ENCODE measurements at regions of chr1 and their contacts with region 1.

Region 1: GRCh38 chr1:204446370-204447111 is 34.9 kb upstream of the PPP1R15B start:
- DNase-seq: peak; percentile 84
- ATAC-seq: peak; percentile 93
- H3K4me3 Mint-ChIP-seq: no peak overlapping the region
- H3K27ac Mint-ChIP-seq: peak overlapping the region; percentile 81
- H3K4me1 Mint-ChIP-seq: peaks cover 30% of the 10 kb centered on the region
- H3K27me3 Mint-ChIP-seq: no peaks in the 10 kb centered on the region

Region 2: GRCh38 chr1:204307334-204307883 is 139.1 kb before region 1 on chr1:
- CTCF ChIA-PET with region 1: no interaction called
- POLR2A ChIA-PET with region 1: no interaction called
- DNase-seq: no peak
- ATAC-seq: no peak
- H3K4me3 Mint-ChIP-seq: no peak overlapping the region
- H3K27ac Mint-ChIP-seq: no peak overlapping the region
- H3K4me1 Mint-ChIP-seq: no peaks in the 10 kb centered on the region
- H3K27me3 Mint-ChIP-seq: peaks cover 20% of the 10 kb centered on the region

Region 3: DNA sequence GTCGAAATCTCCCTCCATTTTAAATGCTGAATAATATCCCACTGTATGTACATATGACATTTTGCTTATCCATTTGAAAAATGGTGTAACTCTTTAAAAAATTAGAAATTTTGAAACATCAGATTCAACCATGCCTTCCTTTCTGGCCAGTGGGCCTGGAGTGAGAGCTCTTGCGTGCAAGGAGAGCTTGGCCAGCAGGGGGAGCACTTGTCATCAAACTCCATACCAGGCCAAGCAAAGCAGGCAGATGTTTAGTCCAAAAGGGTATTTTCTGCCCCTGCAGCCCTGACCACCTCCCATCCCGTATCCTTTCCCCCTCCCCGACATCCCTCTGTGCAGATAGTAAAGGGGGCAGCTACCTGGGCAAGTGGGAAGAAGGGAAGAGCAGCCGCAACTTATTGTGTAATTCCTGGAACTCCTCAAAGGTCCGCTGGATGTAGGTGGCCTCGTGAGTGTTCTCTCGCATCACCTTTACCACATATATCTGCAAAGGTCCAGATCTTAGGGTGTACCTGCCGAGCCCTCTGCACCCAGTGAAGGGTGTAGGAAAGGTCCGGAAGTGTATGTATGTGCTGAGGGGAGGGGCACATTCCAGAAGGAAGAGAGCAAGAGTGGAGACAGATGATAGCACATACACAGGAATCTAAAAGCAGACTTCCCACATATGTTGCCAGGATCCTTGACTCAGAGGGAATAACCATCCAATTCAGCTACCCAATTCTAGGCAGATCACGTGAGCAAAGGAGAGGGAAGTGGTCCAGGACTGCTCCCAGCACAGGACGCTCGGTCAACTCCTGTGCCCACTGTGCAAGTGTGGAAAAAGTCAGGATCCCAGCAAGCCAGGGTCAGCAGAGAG is 15.0 kb before region 1 on chr1:
- CTCF ChIA-PET with region 1: interaction called, 226 read pairs
- POLR2A ChIA-PET with region 1: interaction called, 6 read pairs
- DNase-seq: peak; percentile 86
- ATAC-seq: peak; percentile 93
- H3K4me3 Mint-ChIP-seq: no peak overlapping the region
- H3K27ac Mint-ChIP-seq: no peak overlapping the region
- H3K4me1 Mint-ChIP-seq: no peaks in the 10 kb centered on the region
- H3K27me3 Mint-ChIP-seq: no peaks in the 10 kb centered on the region

Region 4: GRCh38 chr1:204480515-204480914 is 34.0 kb after region 1 on chr1:
- CTCF ChIA-PET with region 1: interaction called, 39 read pairs
- POLR2A ChIA-PET with region 1: no interaction called
- DNase-seq: no peak
- ATAC-seq: peak; percentile 32
- H3K4me3 Mint-ChIP-seq: no peak overlapping the region
- H3K27ac Mint-ChIP-seq: no peak overlapping the region
- H3K4me1 Mint-ChIP-seq: peaks cover 34% of the 10 kb centered on the region
- H3K27me3 Mint-ChIP-seq: no peaks in the 10 kb centered on the region

Region 5: GRCh38 chr1:204494281-204495077 is 47.9 kb after region 1 on chr1 and contains the start of gene PIK3C2B:
- CTCF ChIA-PET with region 1: interaction called, 1,090 read pairs
- POLR2A ChIA-PET with region 1: interaction called, 18 read pairs
- DNase-seq: peak; percentile 80
- ATAC-seq: peak; percentile 86
- H3K4me3 Mint-ChIP-seq: peak within 1 kb of the TSS; percentile 77
- H3K27ac Mint-ChIP-seq: peak within 1 kb of the TSS; percentile 89
- H3K4me1 Mint-ChIP-seq: peaks cover 58% of the 10 kb centered on the region
- H3K27me3 Mint-ChIP-seq: peaks cover 2% of the 10 kb centered on the region
- total RNA-seq, gene PIK3C2B: 26.2 to 28.4 TPM

Region 6: DNA sequence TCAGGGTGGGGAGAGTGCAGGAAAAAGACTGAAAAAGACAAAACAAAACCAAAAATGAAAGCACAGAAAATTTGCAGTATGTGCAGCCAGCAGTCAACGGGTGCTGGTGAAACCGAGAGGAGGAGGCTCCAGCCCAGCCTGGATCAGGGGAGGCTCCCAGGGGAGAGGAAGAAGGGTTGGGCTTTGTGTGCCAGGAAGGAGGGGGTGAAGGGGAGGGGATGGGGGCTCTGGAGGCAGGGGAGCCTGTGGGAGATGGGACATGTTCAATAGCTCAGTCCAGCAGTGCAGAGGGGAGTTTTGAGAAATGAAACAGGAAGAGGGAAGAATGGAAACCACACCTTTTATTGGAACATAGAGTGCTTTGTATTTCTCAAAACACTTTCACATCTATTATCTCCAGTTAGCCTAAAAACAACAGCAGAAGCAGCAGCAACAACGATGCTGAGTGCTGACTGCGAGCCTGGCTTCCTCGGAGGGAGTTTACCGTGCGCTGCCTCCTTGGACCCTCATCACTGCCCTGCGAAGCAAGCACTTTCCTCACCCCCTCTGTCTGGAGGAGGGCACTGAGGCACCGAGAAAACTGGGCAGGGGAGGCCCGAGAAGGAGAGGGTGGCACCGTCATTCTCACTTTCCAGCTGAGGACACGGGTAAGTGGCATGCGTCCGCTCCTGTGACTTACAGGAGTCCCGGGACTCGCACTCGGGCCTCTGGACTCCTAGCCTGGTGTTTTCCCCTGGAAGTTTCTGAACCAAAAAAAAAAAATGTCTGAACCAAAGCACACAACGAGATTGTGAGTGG is 132.5 kb after region 1 on chr1:
- CTCF ChIA-PET with region 1: no interaction called
- POLR2A ChIA-PET with region 1: no interaction called
- DNase-seq: peak; percentile 54
- ATAC-seq: peak; percentile 80
- H3K4me3 Mint-ChIP-seq: peak overlapping the region; percentile 63
- H3K27ac Mint-ChIP-seq: peak overlapping the region; percentile 90
- H3K4me1 Mint-ChIP-seq: peaks cover 33% of the 10 kb centered on the region
- H3K27me3 Mint-ChIP-seq: no peaks in the 10 kb centered on the region

Measured in activated CD8-positive, alpha-beta T cell treated with anti-CD3 and anti-CD28 coated beads, Interleukin-2, amount 10 ng/mL, durations not matched to agents 7 days and 5 days (primary cell).